GM12878 (cell line): ENCODE measurements at regions of chr13 and their contacts with region 1.

Region 1: DNA sequence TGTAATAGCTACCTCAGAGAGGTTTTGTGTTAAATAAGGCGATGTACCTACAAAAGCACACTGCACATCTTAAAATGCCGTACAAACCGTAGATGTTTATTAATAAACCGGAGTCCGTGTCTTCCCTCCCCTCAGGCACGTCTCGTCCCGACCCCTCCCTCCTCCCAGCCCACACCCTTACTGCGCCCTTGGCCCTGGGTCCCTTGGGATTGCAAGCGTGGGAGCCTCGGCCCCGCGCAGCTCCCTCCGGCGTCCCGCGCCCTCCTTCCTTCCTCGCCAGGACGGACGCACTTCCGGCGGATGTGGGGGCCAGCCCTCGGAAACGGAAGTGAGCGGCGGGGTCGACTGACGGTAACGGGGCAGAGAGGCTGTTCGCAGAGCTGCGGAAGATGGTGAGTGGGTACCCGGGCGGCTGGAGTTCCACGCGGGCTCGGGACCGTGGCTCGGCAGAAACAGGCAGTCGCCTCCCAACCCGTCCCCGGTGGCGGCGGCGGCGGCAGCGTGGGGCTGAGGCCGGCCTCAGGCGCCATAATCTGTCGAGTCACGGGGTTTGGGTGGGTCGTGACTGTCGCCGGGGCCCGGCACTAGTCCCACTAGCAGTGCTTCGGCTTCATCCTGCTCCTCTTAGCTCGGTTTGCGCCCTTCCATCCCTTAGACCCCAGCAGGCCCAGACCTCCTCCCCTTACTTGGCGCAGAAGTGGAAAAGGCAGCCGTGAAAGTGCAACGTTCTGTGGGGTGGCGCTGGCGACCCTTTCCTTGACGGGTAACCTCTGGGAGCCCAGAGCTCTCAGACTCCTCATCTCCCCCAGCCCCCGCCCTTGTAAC is at the start of gene POMP:
- DNase-seq: peak; percentile 82
- ATAC-seq: peak; percentile 85
- H3K4me3 ChIP-seq: peak within 1 kb of the TSS; percentile 80
- H3K27ac ChIP-seq: peak within 1 kb of the TSS; percentile 99
- H3K4me1 ChIP-seq: 0 out of 2 replicates have a peak, but pooled peaks cover 4% of the 10 kb centered on the region
- H3K27me3 ChIP-seq: no peaks in the 10 kb centered on the region
- CTCF ChIP-seq: no peak
- EP300 ChIP-seq: peak in 1 of 2 experiments; percentile 63; a peak in 2 of 4 replicates
- POLR2A ChIP-seq: peak; percentile 99
- RAD21 ChIP-seq: 0 out of 2 replicates have a peak, but pooled peaks have one; percentile 4
- polyA plus RNA-seq, gene POMP: 655 to 668 TPM

Region 2: DNA sequence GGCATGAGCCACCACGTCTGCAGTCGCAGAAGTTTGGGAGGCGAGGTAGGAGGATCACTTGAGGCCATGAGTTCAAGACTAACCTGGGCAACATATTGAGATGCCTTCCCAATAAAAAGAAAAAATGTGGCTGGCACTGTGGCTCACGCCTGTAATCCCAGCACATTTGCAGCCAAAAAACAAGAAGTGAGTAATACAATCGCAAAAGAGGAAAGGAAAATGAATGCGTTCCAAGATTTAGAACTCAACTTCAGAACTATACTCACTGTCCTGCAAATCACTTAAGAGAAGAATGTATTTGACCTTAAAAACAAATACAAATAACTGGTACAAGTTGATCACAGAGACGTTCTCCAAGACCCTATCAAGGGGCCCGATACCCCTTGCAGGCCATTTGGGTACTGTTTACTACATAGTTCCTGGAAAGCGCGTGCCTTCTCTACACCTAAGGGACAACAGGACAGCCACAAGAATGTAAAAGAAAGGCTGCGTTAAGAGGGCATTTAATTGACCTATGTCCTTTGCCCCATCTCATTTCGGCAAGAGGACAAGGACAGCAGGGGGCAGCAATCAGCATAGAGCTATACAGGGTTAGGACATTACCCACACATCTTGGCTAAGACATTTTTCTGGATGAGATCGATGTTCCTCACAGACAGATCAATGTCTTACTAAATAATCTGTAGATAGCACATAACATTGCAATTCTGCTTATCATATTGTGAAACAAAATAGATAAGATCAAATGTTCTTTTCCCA is 600.0 kb before region 1 on chr13:
- CTCF ChIA-PET with region 1: no interaction called
- POLR2A ChIA-PET with region 1: no interaction called
- RAD21 ChIA-PET with region 1: interaction called, 3 read pairs
- SMC1A ChIA-PET with region 1: no interaction called
- in situ Hi-C with region 1: no loop called
- intact Hi-C with region 1: loop called (anchors 10 kb)
- DNase-seq: no peak
- ATAC-seq: peak; percentile 47; the same call in 2 of the 3 replicates
- H3K4me3 ChIP-seq: no peak overlapping the region
- H3K27ac ChIP-seq: no peak overlapping the region
- H3K4me1 ChIP-seq: peaks cover 19% of the 10 kb centered on the region
- H3K27me3 ChIP-seq: no peaks in the 10 kb centered on the region
- CTCF ChIP-seq: peak; percentile 34 to 49 (median 44); a peak in 4 of 6 replicates
- EP300 ChIP-seq: no peak
- POLR2A ChIP-seq: no peak
- RAD21 ChIP-seq: peak; percentile 45; the same call in 1 of the 2 replicates

Region 3: DNA sequence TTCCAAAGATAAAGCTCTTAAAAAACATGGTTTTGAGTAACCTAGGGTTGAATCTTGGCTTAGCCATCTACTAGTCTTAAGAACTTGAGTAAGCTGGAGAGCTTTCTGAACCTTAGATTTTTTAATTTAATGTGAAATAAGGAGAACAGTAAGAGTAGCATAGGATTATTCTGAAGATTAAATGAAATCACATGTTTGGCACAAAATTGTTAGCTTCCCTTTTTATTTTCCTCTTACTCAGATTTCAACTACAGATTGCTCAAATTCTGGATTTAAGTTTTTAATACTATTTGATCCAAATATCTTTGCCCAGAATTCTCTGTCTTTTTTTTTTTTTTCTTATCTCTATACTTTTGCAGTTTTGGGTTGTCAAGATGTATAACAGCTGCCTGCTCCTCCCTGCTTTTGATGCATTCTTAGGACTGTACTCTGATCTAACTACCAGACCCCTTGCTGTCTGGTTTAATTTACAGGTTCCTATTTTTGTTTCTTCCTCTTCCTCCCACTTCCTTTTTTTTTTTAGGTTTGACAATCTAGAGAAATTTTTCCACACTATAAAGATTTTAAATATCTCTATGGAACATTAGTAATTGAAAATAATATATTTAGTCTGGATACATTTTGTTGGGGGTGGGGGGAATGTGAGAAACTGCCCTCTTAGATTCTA is 12.3 kb after region 1 on chr13:
- CTCF ChIA-PET with region 1: interaction called, 5 read pairs
- POLR2A ChIA-PET with region 1: interaction called, 3 read pairs
- RAD21 ChIA-PET with region 1: interaction called, 5 read pairs
- SMC1A ChIA-PET with region 1: interaction called, 15 read pairs
- in situ Hi-C with region 1: no loop called
- intact Hi-C with region 1: no loop called
- DNase-seq: no peak
- ATAC-seq: no peak
- H3K4me3 ChIP-seq: no peak overlapping the region
- H3K27ac ChIP-seq: no peak overlapping the region
- H3K4me1 ChIP-seq: no peaks in the 10 kb centered on the region
- H3K27me3 ChIP-seq: no peaks in the 10 kb centered on the region
- CTCF ChIP-seq: no peak
- EP300 ChIP-seq: no peak
- POLR2A ChIP-seq: no peak
- RAD21 ChIP-seq: no peak